ENCODE measurements at regions of chr16 and their contacts with region 1.

Region 1: GRCh38 chr16:23556881-23557778 is at the starts of genes EARS2 and UBFD1:
- DNase-seq: peak; percentile 98
- total RNA-seq, gene EARS2: 16.4 TPM
- total RNA-seq, gene UBFD1: 49.7 TPM

Region 2: GRCh38 chr16:23504451-23505179 is 52.5 kb before region 1 on chr16:
- intact Hi-C with region 1: loop called (anchors 5 kb)
- DNase-seq: no peak

Region 3: GRCh38 chr16:23544436-23544835 is 12.7 kb before region 1 on chr16:
- intact Hi-C with region 1: no loop called
- DNase-seq: no peak

Region 4: GRCh38 chr16:23595951-23596720 is 39.0 kb after region 1 on chr16 and contains the start of gene NDUFAB1:
- intact Hi-C with region 1: loop called (anchors 1 kb)
- DNase-seq: peak; percentile 96
- total RNA-seq, gene NDUFAB1: 277 TPM

Region 5: DNA sequence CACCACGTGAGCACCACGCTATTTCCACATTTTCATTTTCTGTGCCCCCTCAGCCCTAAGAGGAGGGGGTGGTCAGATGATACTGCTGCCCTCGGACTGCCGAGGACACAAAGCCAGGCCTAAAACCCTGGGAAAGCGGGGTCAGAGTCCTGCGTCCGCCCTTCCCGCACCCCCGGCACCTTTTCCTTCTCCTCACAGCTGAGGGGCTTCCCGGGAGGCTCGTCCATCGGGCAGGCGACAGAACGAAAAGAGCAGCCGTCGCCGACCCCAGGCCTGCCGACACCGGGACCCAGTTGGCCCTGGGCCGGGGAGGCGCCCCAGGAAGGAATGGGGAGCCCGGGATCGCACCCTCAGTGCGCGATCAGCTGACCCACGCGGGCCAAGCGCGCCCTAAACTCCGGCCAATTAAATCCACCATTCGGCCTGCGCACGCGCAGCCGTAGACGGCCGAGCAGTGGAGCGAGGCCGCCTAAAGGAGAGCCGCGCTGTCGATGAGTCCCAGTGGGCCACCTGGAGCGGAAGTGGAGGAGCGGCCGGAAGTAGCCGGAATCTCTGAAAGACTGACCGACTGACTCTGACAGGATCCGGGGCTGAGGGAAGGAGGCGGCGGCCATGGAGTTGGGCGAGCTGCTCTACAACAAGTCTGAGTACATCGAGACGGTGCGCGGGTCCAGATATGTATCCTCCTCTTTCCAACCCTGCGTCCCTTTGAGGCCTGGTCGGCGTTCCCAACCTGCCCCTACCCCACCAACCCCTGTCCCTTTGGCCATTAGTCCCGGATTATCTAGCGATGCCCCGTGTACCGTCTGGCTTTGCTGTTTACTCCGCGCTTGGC is 84.0 kb after region 1 on chr16 and contains the starts of genes DCTN5 and PALB2:
- intact Hi-C with region 1: loop called (anchors 5 kb)
- DNase-seq: peak; percentile 97
- total RNA-seq, gene DCTN5: 38.4 TPM
- total RNA-seq, gene PALB2: 4.6 TPM